B cell (primary cell): ENCODE measurements at regions of chr4 and their contacts with region 1.

Region 1: GRCh38 chr4:36399762-36400353 is 118.4 kb downstream of the DTHD1 start:
- DNase-seq: peak; percentile 67
- ATAC-seq: peak; percentile 56
- H3K4me3 ChIP-seq: no peak overlapping the region
- H3K4me3 Mint-ChIP-seq: no peak overlapping the region
- H3K27ac ChIP-seq: no peak overlapping the region
- H3K27ac Mint-ChIP-seq: no peak overlapping the region
- H3K4me1 ChIP-seq: no peaks in the 10 kb centered on the region
- H3K4me1 Mint-ChIP-seq: no peaks in the 10 kb centered on the region
- H3K27me3 ChIP-seq: no peaks in the 10 kb centered on the region
- H3K27me3 Mint-ChIP-seq: no peaks in the 10 kb centered on the region
- CTCF ChIP-seq: peak; percentile 84

Region 2: DNA sequence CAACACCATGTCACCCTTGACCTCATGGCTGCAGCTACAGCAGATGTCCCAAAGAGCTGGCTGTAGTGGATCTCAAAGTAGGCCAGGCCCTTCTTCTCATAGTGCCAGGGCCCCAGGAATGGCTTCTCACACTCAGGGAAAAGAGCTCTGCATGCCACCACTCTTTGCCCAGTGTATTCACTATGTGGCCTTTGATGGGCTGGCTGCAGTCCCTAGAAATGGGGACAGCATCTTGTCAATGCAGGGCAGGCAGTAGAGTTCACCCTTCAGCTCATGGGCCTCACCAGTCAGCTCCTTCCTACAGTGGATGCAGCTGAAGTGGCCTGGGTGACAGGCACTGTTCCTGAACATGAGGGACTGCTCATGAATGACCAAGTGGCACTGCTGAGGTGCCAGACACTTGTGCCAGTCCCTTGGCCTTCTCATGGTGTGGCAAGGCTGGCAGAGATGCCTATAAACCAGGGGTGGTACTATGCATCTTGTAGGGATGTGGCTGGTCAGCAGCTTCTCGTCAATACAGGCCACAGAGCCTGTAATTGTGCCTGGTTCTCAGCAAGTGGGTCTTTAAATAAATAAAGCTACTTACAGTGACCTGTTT is 334.5 kb before region 1 on chr4:
- CTCF ChIA-PET with region 1: no interaction called
- POLR2A ChIA-PET with region 1: no interaction called
- intact Hi-C with region 1: no loop called
- DNase-seq: no peak
- ATAC-seq: no peak
- H3K4me3 ChIP-seq: no peak overlapping the region
- H3K4me3 Mint-ChIP-seq: no peak overlapping the region
- H3K27ac ChIP-seq: no peak overlapping the region
- H3K27ac Mint-ChIP-seq: no peak overlapping the region
- H3K4me1 ChIP-seq: no peaks in the 10 kb centered on the region
- H3K4me1 Mint-ChIP-seq: no peaks in the 10 kb centered on the region
- H3K27me3 ChIP-seq: no peaks in the 10 kb centered on the region
- H3K27me3 Mint-ChIP-seq: no peaks in the 10 kb centered on the region
- CTCF ChIP-seq: no peak

Region 3: DNA sequence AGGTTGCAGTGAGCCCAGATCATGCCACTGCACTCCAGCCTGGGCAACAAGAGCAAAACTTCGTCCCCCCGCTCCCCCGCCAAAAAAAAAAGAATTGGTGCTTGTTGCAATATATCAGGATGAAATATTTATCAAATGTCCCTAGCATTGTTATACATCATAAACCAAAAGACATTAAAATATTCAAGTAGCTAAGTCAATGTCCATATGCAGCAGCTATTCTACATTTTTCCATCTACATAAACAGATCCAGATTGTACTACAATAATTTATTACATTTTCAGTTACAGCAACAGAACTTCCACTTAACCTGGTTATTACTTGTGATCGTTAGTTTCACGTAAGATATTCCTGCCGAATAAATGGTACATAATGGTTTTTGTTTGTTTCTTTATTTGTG is 219.7 kb before region 1 on chr4:
- CTCF ChIA-PET with region 1: interaction called, 25 read pairs
- POLR2A ChIA-PET with region 1: no interaction called
- intact Hi-C with region 1: loop called (anchors 2 kb)
- DNase-seq: no peak
- ATAC-seq: no peak
- H3K4me3 ChIP-seq: no peak overlapping the region
- H3K4me3 Mint-ChIP-seq: no peak overlapping the region
- H3K27ac ChIP-seq: no peak overlapping the region
- H3K27ac Mint-ChIP-seq: no peak overlapping the region
- H3K4me1 ChIP-seq: no peaks in the 10 kb centered on the region
- H3K4me1 Mint-ChIP-seq: peaks cover 6% of the 10 kb centered on the region
- H3K27me3 ChIP-seq: no peaks in the 10 kb centered on the region
- H3K27me3 Mint-ChIP-seq: no peaks in the 10 kb centered on the region
- CTCF ChIP-seq: no peak

Region 4: DNA sequence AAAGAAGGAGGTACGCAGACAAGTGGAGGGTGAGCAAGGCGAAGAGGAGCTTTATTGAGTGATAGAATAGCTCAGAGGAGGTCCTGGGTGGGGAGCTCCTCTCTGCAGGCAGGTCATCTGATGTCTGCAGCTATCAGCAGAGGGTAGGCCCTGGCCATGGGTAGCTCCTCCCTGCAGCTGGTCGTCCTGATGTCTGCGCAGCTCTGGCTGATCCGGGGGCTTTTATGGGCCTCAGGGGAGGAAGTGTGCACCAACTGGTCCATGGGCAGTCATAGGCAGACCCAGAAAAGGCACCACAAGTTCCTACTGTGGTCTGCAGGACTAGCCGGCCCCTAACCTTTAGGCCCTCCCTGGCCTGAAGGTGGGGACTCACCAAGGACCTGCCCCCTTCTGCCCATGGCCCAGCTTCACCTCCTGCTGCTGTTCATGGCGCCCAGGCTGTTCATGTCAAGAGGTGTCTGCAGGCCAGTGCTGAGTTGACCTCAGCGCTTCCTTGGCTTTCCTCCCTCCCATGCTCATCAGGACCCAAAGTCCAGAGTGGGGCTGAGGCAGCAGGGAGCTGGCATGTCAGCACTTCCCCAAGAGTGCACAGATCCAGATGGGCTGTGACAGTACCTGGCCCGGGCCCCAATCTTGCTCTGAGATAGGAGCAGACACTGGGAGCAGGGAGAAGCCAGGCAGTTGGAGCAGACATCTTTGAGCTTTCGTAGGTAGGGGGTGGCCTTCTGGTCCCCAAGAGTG is 201.6 kb before region 1 on chr4:
- CTCF ChIA-PET with region 1: interaction called, 12 read pairs
- POLR2A ChIA-PET with region 1: no interaction called
- intact Hi-C with region 1: no loop called
- DNase-seq: no peak
- ATAC-seq: no peak
- H3K4me3 ChIP-seq: no peak overlapping the region
- H3K4me3 Mint-ChIP-seq: no peak overlapping the region
- H3K27ac ChIP-seq: no peak overlapping the region
- H3K27ac Mint-ChIP-seq: no peak overlapping the region
- H3K4me1 ChIP-seq: no peaks in the 10 kb centered on the region
- H3K4me1 Mint-ChIP-seq: no peaks in the 10 kb centered on the region
- H3K27me3 ChIP-seq: no peaks in the 10 kb centered on the region
- H3K27me3 Mint-ChIP-seq: no peaks in the 10 kb centered on the region
- CTCF ChIP-seq: no peak

Region 5: GRCh38 chr4:36255577-36255976 is 144.3 kb before region 1 on chr4:
- CTCF ChIA-PET with region 1: interaction called, 18 read pairs
- POLR2A ChIA-PET with region 1: no interaction called
- intact Hi-C with region 1: no loop called
- DNase-seq: peak; percentile 76
- ATAC-seq: peak; percentile 92
- H3K4me3 ChIP-seq: peak overlapping the region in 4 of 5 experiments; percentile 15 to 61 (median 18)
- H3K4me3 Mint-ChIP-seq: peak overlapping the region; percentile 78
- H3K27ac ChIP-seq: peak overlapping the region; percentile 13 to 80
- H3K27ac Mint-ChIP-seq: peak overlapping the region; percentile 93
- H3K4me1 ChIP-seq: peaks cover 22 to 26% of the 10 kb centered on the region in 2 donors
- H3K4me1 Mint-ChIP-seq: peaks cover 32% of the 10 kb centered on the region
- H3K27me3 ChIP-seq: no peaks in the 10 kb centered on the region
- H3K27me3 Mint-ChIP-seq: no peaks in the 10 kb centered on the region
- CTCF ChIP-seq: no peak

Region 6: GRCh38 chr4:36351082-36351666 is 48.7 kb before region 1 on chr4:
- CTCF ChIA-PET with region 1: interaction called, 81 read pairs
- POLR2A ChIA-PET with region 1: no interaction called
- intact Hi-C with region 1: loop called (anchors 1 kb)
- DNase-seq: peak; percentile 77
- ATAC-seq: peak; percentile 53
- H3K4me3 ChIP-seq: no peak overlapping the region
- H3K4me3 Mint-ChIP-seq: no peak overlapping the region
- H3K27ac ChIP-seq: no peak overlapping the region
- H3K27ac Mint-ChIP-seq: no peak overlapping the region
- H3K4me1 ChIP-seq: peaks cover 15 to 19% of the 10 kb centered on the region in 2 donors
- H3K4me1 Mint-ChIP-seq: peaks cover 21% of the 10 kb centered on the region
- H3K27me3 ChIP-seq: no peaks in the 10 kb centered on the region
- H3K27me3 Mint-ChIP-seq: peaks cover 3% of the 10 kb centered on the region
- CTCF ChIP-seq: peak; percentile 91

Region 7: GRCh38 chr4:36414248-36414647 is 14.4 kb after region 1 on chr4:
- CTCF ChIA-PET with region 1: interaction called, 11 read pairs
- POLR2A ChIA-PET with region 1: no interaction called
- intact Hi-C with region 1: no loop called
- DNase-seq: no peak
- ATAC-seq: no peak
- H3K4me3 ChIP-seq: no peak overlapping the region
- H3K4me3 Mint-ChIP-seq: no peak overlapping the region
- H3K27ac ChIP-seq: no peak overlapping the region
- H3K27ac Mint-ChIP-seq: no peak overlapping the region
- H3K4me1 ChIP-seq: no peaks in the 10 kb centered on the region
- H3K4me1 Mint-ChIP-seq: no peaks in the 10 kb centered on the region
- H3K27me3 ChIP-seq: peaks cover 0 to 27% (median 0%) of the 10 kb centered on the region in 4 experiments
- H3K27me3 Mint-ChIP-seq: peaks cover 42% of the 10 kb centered on the region
- CTCF ChIP-seq: no peak

Region 8: DNA sequence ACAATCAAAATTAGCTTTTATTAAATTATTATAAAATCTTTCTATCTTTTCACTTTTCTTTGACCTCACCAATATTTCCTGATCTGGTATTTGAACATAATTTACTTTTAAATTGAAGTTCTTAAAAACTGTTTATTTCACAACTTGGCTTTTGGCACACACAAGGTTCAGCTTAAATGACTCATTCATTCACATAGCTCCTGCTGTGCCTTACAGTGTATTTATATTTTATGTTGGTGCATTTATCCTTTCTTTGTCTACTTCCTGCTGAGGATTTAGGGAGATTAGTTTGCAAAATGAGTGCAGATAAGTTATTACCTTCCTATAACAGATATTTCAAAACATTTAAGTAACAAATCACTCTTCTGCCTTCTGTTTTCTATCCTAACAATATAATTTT is 312.2 kb after region 1 on chr4:
- CTCF ChIA-PET with region 1: no interaction called
- POLR2A ChIA-PET with region 1: no interaction called
- intact Hi-C with region 1: no loop called
- DNase-seq: no peak
- ATAC-seq: no peak
- H3K4me3 ChIP-seq: no peak overlapping the region
- H3K4me3 Mint-ChIP-seq: no peak overlapping the region
- H3K27ac ChIP-seq: no peak overlapping the region
- H3K27ac Mint-ChIP-seq: no peak overlapping the region
- H3K4me1 ChIP-seq: no peaks in the 10 kb centered on the region
- H3K4me1 Mint-ChIP-seq: no peaks in the 10 kb centered on the region
- H3K27me3 ChIP-seq: no peaks in the 10 kb centered on the region
- H3K27me3 Mint-ChIP-seq: no peaks in the 10 kb centered on the region
- CTCF ChIP-seq: no peak